ENCODE measurements at regions of chr12 and their contacts with region 1.

Region 1: DNA sequence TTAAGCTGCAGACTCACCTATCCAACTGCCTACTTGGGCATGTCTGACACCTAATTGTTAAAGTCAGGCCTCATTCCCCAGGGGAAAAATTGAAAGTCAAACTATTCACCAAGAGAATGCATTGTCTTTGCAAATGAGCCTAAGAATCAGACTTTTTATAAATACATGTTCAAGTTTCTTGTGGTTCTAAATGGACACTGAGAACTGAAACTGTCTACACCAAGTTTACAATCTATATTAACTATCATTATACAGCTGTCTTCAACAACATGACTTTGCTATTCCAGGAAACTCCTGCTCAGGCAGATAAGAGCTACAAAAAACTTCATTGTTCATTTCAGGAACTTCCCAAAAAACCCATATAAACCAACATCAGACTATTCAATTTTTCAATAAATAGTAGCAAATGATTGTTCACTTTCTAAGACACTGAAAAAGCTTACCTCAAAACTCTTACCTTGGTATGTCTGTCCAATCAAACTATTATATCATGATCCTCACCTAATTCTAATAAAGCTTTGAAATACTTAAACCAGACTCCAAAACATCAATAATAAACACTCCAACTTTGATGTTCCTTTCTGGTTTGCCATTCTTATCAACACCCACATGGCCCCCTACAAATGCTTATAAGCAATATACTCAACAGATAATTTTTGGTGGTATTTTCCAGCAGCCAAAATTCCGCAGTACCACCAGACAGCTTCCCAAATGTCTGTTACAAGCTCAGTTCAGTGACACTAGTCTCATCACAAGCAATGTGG is 24.2 kb downstream of the CDK17 start:
- DNase-seq: peak in 3 of 4 experiments; percentile 20 to 65 (median 52)
- ATAC-seq: peak; percentile 61
- H3K4me3 ChIP-seq: no peak overlapping the region; the same call in 1 of the 2 replicates
- H3K27ac ChIP-seq: peak overlapping the region; percentile 82
- H3K4me1 ChIP-seq: peaks cover 13 to 53% of the 10 kb centered on the region in 2 experiments
- H3K27me3 ChIP-seq: no peaks in the 10 kb centered on the region
- CTCF ChIP-seq: no peak
- EP300 ChIP-seq: peak; percentile 96
- POLR2A ChIP-seq: no peak
- RAD21 ChIP-seq: no peak

Region 2: DNA sequence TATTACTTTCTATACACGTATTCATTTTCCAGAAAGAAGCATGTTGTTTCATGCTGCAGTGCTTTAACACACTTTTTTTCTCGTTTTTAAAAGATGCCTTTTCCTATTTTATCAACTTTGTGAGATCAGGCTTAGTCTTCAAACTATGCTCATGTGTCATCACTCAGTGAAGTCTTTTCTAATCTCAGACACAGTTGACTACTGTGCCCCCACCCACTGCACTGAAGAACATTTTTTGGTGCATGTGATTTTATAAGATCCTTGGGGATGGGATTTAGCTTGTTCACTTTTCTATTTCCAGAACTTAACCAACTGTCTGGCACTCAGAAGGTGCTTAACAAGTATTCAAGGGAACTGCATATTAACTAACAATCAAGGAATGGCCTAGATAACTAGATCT is 61.3 kb before region 1 on chr12:
- CTCF ChIA-PET with region 1: no interaction called
- POLR2A ChIA-PET with region 1: no interaction called
- in situ Hi-C with region 1: no loop called
- intact Hi-C with region 1: loop called (anchors 10 kb)
- DNase-seq: peak in 1 of 4 experiments; percentile 30
- ATAC-seq: peak; percentile 81
- H3K4me3 ChIP-seq: no peak overlapping the region
- H3K27ac ChIP-seq: no peak overlapping the region
- H3K4me1 ChIP-seq: peaks cover 0 to 9% of the 10 kb centered on the region in 2 experiments; a peak in 4 of 5 replicates
- H3K27me3 ChIP-seq: no peaks in the 10 kb centered on the region
- CTCF ChIP-seq: no peak
- EP300 ChIP-seq: no peak
- POLR2A ChIP-seq: no peak
- RAD21 ChIP-seq: no peak

Region 3: GRCh38 chr12:96361074-96361473 is 14.9 kb before region 1 on chr12:
- CTCF ChIA-PET with region 1: no interaction called
- POLR2A ChIA-PET with region 1: interaction called, 11 read pairs
- in situ Hi-C with region 1: no loop called
- intact Hi-C with region 1: no loop called
- DNase-seq: no peak
- ATAC-seq: no peak
- H3K4me3 ChIP-seq: no peak overlapping the region
- H3K27ac ChIP-seq: no peak overlapping the region
- H3K4me1 ChIP-seq: peaks cover 8 to 20% of the 10 kb centered on the region in 2 experiments; a peak in 3 of 5 replicates
- H3K27me3 ChIP-seq: no peaks in the 10 kb centered on the region
- CTCF ChIP-seq: no peak
- EP300 ChIP-seq: no peak
- POLR2A ChIP-seq: no peak
- RAD21 ChIP-seq: no peak

Measured in K562 (cell line).